Aorta (tissue), 5 donors: ENCODE measurements at regions of chr12 and their contacts with region 1.

Region 1: GRCh38 chr12:5745265-5745888 is 199.7 kb downstream of the ANO2 start:
- DNase-seq: peak; percentile 67 to 84
- ATAC-seq: peak; percentile 79
- H3K4me3 ChIP-seq: no peak overlapping the region
- H3K27ac ChIP-seq: no peak overlapping the region
- H3K4me1 ChIP-seq: no peaks in the 10 kb centered on the region
- H3K27me3 ChIP-seq: no peaks in the 10 kb centered on the region

Region 2: DNA sequence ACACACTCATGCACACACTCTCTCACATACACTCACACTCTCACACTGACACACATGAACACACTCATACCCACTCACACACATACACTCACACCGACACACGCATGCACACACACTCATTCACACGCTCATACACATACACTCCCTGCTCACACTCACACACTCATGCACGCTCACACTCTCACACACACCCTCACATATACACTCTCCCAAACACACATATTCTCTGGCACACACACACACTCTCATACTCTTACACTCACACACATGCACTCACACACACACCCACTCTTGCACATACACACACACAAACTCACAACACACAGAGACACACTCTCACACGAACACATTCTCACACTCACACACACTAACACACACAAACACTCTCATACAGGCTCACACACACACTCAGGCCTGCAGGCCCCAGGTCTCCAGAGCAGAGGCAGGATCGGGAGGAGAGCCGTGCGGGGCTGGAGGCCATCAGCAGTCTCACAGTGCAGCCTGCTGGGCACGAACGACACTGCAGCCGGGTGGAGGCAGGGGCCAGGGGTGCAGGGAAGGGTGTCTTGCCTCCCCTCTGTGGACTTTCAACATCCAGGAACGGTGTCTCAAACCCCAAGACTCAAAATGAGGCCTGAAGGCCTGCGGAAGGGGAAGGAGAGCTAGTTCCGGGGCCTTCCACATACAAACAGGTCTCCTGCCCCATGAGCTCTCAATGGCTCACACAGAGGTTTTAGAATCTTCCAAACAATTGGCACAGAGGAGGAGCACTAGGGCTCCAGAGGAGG is 51.0 kb after region 1 on chr12:
- intact Hi-C with region 1: loop called in 1 of 2 experiments (anchors 2 kb)
- DNase-seq: peak in 1 of 2 donors; percentile 80
- ATAC-seq: peak; percentile 72
- H3K4me3 ChIP-seq: no peak overlapping the region
- H3K27ac ChIP-seq: no peak overlapping the region
- H3K4me1 ChIP-seq: no peaks in the 10 kb centered on the region
- H3K27me3 ChIP-seq: no peaks in the 10 kb centered on the region

Region 3: DNA sequence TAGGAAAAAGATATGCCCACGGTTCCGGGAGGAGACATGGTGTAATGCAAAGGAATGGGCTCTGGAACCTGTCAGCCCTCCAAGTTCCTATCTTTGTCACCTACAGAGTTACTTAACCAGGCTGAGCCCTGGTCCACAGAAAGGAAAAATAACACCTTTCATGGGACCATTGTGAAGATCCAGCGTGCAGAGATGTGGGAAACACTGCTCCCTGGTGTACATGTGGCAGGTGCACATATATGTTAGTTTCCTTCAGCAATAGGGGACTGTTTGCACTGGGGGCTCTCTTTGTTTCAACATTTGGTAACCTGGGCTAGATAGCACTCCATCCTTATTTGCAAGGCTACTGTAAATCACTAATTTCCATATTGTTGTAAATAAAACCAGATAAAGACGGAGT is 127.4 kb after region 1 on chr12:
- intact Hi-C with region 1: loop called in 1 of 2 experiments (anchors 5 kb)
- DNase-seq: no peak
- ATAC-seq: no peak
- H3K4me3 ChIP-seq: no peak overlapping the region
- H3K27ac ChIP-seq: no peak overlapping the region
- H3K4me1 ChIP-seq: no peaks in the 10 kb centered on the region
- H3K27me3 ChIP-seq: peaks cover 2 to 3% of the 10 kb centered on the region in 2 donors

Region 4: DNA sequence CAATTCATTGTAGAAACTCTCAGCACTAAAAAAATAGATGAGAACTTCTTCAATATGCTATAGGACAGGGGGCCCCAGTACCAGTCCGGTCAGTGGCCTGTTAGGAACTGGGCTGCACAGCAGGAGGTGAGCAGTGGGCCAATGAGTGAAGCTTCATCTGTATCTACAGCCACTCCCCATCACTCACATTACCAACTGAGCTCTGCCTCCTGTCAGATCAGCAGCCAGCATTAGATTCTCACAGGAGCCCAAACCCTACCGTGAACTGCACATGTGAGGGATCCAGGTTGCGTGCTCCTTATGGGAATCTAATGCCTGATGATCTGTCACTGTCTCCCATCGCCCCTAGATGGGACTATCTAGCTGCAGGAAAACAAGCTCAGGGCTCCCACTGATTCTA is 215.4 kb after region 1 on chr12:
- intact Hi-C with region 1: no loop called
- DNase-seq: no peak
- ATAC-seq: no peak
- H3K4me3 ChIP-seq: no peak overlapping the region
- H3K27ac ChIP-seq: no peak overlapping the region
- H3K4me1 ChIP-seq: no peaks in the 10 kb centered on the region
- H3K27me3 ChIP-seq: no peaks in the 10 kb centered on the region

Region 5: DNA sequence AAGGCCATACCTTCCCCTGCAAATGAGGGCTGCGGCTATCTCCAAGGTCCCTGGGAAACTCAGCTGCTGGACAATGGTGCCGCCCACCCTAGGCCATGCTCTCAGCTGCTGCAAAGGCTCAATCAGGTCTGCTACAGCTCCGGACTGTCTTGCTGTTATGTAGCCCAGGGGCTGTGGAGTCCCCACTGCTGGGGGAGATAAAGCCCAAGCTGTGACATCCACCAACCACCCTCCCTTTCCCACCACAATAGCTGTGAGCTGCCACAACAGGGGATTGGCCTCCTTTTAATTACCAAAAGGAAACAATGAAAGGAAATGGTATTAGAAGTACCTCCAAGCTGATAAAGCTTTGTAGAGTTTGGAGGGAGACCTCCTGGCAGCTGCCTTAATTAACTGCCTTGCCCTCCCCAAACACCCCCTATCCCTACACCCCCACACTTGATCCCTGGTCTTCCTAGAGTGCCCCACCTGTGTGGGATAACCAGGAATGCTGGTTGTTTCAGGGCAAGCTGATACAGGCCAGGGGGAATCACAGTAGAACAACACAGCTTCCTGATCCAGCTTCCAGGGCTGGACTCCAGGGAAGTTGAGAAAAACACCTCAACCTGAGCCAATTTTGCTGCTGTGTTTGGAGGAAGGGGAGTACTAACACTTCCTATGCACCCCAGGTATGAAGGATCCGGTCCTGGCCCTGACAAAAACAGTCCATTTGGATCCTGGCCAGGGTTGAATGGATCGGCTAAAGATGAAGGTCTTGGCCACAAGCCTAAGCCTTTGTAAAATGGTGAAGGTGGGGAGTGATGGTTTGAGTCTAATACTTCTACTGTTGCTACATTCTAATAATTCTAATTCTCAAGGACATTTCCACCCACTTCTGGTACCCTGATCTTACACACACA is 379.3 kb after region 1 on chr12 and contains the start of gene VWF:
- intact Hi-C with region 1: no loop called
- DNase-seq: no peak
- ATAC-seq: peak; percentile 31
- H3K4me3 ChIP-seq: no peak within 1 kb of the TSS
- H3K27ac ChIP-seq: no peak within 1 kb of the TSS
- H3K4me1 ChIP-seq: no peaks in the 10 kb centered on the region
- H3K27me3 ChIP-seq: no peaks in the 10 kb centered on the region
- total RNA-seq, gene VWF: 490 to 619 TPM